Common myeloid progenitor, CD34-positive (primary cell): ENCODE measurements at regions of chr17 and their contacts with region 1.

Region 1: GRCh38 chr17:46013502-46014165 is 14.6 kb downstream of the STH start:
- DNase-seq: no peak
- H3K4me3 ChIP-seq: no peak overlapping the region
- H3K27ac ChIP-seq: no peak overlapping the region
- H3K4me1 ChIP-seq: no peaks in the 10 kb centered on the region
- H3K27me3 ChIP-seq: no peaks in the 10 kb centered on the region

Region 2: GRCh38 chr17:46002311-46002972 is 11.2 kb before region 1 on chr17:
- CTCF ChIA-PET with region 1: interaction called, 20 read pairs
- POLR2A ChIA-PET with region 1: interaction called, 3 read pairs
- DNase-seq: peak; percentile 54 to 78 (median 69)
- H3K4me3 ChIP-seq: no peak overlapping the region
- H3K27ac ChIP-seq: no peak overlapping the region
- H3K4me1 ChIP-seq: no peaks in the 10 kb centered on the region
- H3K27me3 ChIP-seq: no peaks in the 10 kb centered on the region